ENCODE measurements at regions of chr1 and their contacts with region 1.

Region 1: DNA sequence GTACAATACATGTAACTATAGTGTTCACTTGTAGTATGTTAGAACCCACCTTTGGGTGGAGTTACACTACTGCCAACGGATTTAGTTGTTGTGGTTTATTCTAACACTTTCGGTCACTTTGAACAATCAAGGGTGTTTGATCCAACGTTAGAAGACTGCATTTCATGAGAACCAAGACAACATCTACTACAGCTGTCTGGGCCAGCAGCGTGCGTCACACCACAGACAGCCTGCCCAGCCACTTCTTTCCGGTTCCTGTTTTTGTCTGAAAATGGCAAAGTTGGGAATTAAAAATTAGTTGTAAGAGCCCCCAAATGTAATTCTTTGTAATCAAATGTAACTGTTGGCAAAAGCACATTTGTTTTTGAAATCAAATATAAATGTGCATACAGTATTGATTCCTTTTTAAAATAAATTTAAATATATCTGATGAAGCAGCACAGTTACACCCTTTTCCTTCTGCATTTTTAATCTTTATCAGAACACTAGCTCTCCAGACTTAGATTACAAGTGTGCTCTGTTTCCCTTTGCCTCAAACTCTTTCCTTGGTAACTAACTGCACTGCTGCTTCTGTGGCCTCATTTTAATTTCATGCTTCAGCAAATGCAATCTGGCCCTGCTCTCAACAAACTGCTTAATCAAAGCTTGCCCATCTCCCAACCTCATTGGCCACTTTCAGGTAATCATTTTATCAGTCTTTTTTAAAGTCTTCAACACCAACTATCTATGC is 86.6 kb upstream of the DPH5 start:
- DNase-seq: peak; percentile 76
- H3K4me3 Mint-ChIP-seq: peak overlapping the region; percentile 25
- H3K27ac Mint-ChIP-seq: peak overlapping the region; percentile 87
- H3K4me1 Mint-ChIP-seq: peaks cover 56% of the 10 kb centered on the region
- H3K27me3 Mint-ChIP-seq: no peaks in the 10 kb centered on the region

Region 2: DNA sequence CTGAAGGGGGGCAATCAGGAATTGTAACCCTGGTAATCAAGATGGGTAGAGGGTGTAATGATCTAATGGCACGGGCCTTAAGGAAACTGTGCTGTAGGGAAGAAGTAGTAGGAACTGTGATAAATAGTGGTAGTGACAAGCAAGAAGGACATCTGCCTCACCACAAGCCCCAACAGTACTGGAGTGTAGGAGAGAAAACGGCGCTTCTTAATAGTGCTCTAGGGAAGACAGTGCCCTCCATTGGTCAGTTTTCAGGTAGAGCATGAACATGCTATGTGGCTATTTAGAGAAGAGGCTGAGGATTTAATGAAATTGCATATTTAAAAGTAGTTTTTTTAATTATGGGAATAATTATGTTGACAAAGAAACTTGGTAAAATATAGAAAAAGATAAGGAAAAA is 184.1 kb before region 1 on chr1:
- CTCF ChIA-PET with region 1: no interaction called
- POLR2A ChIA-PET with region 1: no interaction called
- intact Hi-C with region 1: loop called (anchors 1 kb)
- DNase-seq: no peak
- H3K4me3 Mint-ChIP-seq: no peak overlapping the region
- H3K27ac Mint-ChIP-seq: no peak overlapping the region
- H3K4me1 Mint-ChIP-seq: peaks cover 58% of the 10 kb centered on the region
- H3K27me3 Mint-ChIP-seq: no peaks in the 10 kb centered on the region

Region 3: GRCh38 chr1:101002551-101002950 is 109.7 kb before region 1 on chr1:
- CTCF ChIA-PET with region 1: no interaction called
- POLR2A ChIA-PET with region 1: no interaction called
- intact Hi-C with region 1: no loop called
- DNase-seq: no peak
- H3K4me3 Mint-ChIP-seq: no peak overlapping the region
- H3K27ac Mint-ChIP-seq: no peak overlapping the region
- H3K4me1 Mint-ChIP-seq: peaks cover 51% of the 10 kb centered on the region
- H3K27me3 Mint-ChIP-seq: no peaks in the 10 kb centered on the region

Region 4: DNA sequence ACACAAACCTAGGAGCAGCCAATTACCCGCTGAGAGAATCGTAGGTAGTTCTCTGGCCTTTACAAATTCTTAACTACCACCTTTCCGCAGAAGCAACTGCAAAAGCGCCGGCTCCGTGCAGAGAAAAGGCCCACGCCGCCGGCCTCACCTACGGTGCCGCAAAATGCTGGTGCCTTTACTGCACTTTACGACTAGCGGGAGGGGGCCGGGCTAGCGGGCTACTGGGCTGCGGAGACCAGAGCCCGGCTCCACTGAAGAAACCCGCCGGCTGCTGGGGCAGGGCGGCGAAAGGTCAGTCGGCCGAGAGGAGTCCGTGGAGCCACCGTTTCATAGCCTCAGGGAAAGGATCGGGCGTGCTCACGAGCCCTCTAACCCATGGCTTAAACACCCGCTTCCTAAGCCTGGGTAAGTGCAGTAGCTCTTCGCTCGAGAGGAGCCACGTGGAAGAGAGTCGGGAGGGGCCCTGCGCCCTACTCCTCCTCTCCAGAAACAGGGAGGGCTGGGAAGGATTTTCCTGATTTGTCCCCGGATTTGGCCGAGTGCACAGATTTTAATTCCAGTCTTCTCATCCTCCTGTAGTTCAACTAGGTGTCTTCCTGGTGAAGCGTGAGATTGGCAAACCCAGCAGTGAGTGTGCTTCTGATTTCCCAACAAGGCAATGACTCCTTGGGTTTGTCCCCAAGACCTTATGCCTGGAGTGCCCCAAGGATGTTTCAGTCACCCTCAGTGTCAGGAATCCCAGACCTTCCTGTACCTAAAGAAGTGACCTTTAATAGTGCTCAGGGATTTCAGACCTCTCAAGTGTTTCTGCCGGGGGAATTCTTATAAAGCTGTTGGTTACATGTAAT is 86.3 kb before region 1 on chr1 and contains the start of gene DPH5:
- CTCF ChIA-PET with region 1: no interaction called
- POLR2A ChIA-PET with region 1: no interaction called
- intact Hi-C with region 1: loop called (anchors 2 kb)
- DNase-seq: peak; percentile 94
- H3K4me3 Mint-ChIP-seq: peak within 1 kb of the TSS; percentile 89
- H3K27ac Mint-ChIP-seq: peak within 1 kb of the TSS; percentile 89
- H3K4me1 Mint-ChIP-seq: peaks cover 54% of the 10 kb centered on the region
- H3K27me3 Mint-ChIP-seq: no peaks in the 10 kb centered on the region
- total RNA-seq, gene DPH5: 56.5 to 59.6 TPM

Region 5: DNA sequence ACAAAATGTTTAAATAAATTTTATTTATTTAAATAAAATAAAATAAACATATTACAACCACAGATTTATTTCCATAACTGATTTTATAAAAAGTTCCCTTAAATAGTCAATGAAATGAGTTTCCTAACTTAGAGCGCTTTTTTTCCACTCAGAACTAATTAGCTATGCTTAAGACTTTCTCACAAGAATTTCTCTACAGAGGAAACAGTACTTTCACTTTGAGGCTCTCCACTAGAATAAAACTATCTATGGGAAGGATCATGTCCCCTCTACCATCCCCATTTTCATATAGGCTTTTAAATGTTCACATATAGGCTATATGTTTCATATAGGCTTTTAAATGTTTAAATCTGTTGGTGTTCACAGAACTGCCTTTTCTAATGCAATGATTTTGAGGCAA is 46.6 kb before region 1 on chr1:
- CTCF ChIA-PET with region 1: no interaction called
- POLR2A ChIA-PET with region 1: no interaction called
- intact Hi-C with region 1: loop called (anchors 5 kb)
- DNase-seq: no peak
- H3K4me3 Mint-ChIP-seq: no peak overlapping the region
- H3K27ac Mint-ChIP-seq: no peak overlapping the region
- H3K4me1 Mint-ChIP-seq: peaks cover 42% of the 10 kb centered on the region
- H3K27me3 Mint-ChIP-seq: no peaks in the 10 kb centered on the region

Region 6: GRCh38 chr1:101081496-101082488 is 30.4 kb before region 1 on chr1:
- CTCF ChIA-PET with region 1: no interaction called
- POLR2A ChIA-PET with region 1: no interaction called
- intact Hi-C with region 1: loop called (anchors 2 kb)
- DNase-seq: peak; percentile 62
- H3K4me3 Mint-ChIP-seq: no peak overlapping the region
- H3K27ac Mint-ChIP-seq: no peak overlapping the region
- H3K4me1 Mint-ChIP-seq: peaks cover 34% of the 10 kb centered on the region
- H3K27me3 Mint-ChIP-seq: no peaks in the 10 kb centered on the region

Region 7: GRCh38 chr1:101128211-101128727 is 16.1 kb after region 1 on chr1:
- CTCF ChIA-PET with region 1: no interaction called
- POLR2A ChIA-PET with region 1: no interaction called
- intact Hi-C with region 1: loop called (anchors 2 kb)
- DNase-seq: no peak
- H3K4me3 Mint-ChIP-seq: no peak overlapping the region
- H3K27ac Mint-ChIP-seq: peak overlapping the region; percentile 67
- H3K4me1 Mint-ChIP-seq: peaks cover 58% of the 10 kb centered on the region
- H3K27me3 Mint-ChIP-seq: no peaks in the 10 kb centered on the region